Naive thymus-derived CD4-positive, alpha-beta T cell (primary cell): ENCODE measurements at regions of chrX and their contacts with region 1.

Region 1: DNA sequence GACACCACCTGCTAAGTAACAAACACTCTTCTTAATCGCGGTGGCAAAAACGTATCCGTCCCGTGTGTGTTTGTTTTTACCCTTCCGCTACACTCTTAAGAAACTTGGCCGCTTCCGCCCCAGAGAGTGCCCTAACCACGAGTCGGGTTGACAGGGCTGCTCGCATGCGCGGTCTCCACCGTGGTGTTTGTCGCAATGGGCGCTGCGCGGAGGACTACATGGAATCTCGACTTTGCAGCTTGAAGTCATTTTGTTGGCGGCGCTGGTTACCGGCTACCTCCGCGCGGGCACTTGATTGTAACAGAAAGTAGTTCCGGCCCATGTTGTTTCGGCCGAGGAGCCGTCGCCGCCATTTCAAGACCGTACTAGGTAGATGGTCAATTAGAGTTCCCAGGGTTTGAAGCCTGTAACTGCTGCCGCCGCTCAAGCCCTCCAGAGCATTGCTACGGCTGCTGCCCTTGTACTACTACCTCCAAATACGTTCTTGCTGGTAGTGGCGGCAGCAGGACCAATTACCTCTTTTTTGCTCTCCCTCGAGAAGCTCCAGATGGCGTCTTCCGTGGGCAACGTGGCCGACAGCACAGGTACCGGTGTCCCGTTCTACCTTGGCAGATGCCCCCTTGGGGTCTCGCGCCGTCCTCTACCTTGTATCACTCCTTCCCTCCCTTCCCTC is at the start of gene OGT:
- DNase-seq: peak; percentile 77 to 95 (median 92)
- ATAC-seq: peak; percentile 91
- H3K4me3 ChIP-seq: peak within 1 kb of the TSS; percentile 96
- H3K4me3 Mint-ChIP-seq: peak within 1 kb of the TSS; percentile 76 to 100 (median 98)
- H3K27ac ChIP-seq: peak within 1 kb of the TSS; percentile 91
- H3K27ac Mint-ChIP-seq: peak within 1 kb of the TSS; percentile 92 to 99 (median 99)
- H3K4me1 ChIP-seq: peaks cover 12 to 16% of the 10 kb centered on the region in 2 donors
- H3K4me1 Mint-ChIP-seq: peaks cover 4 to 35% (median 31%) of the 10 kb centered on the region in 7 donors
- H3K27me3 ChIP-seq: no peaks in the 10 kb centered on the region
- H3K27me3 Mint-ChIP-seq: no peaks in the 10 kb centered on the region
- total RNA-seq, gene OGT: 313 to 520 (median 424) TPM

Region 2: GRCh38 chrX:71118032-71118984 is 414.6 kb before region 1 on chrX and contains the start of gene MED12:
- CTCF ChIA-PET with region 1: no interaction called
- POLR2A ChIA-PET with region 1: interaction called, 3 read pairs
- intact Hi-C with region 1: loop called (anchors 5 to 10 kb)
- DNase-seq: peak; percentile 59 to 83 (median 75)
- ATAC-seq: peak; percentile 96
- H3K4me3 ChIP-seq: peak within 1 kb of the TSS; percentile 87
- H3K4me3 Mint-ChIP-seq: peak within 1 kb of the TSS; percentile 81 to 93 (median 86)
- H3K27ac ChIP-seq: peak within 1 kb of the TSS; percentile 93
- H3K27ac Mint-ChIP-seq: peak within 1 kb of the TSS; percentile 84 to 95 (median 92)
- H3K4me1 ChIP-seq: peaks cover 9 to 13% of the 10 kb centered on the region in 2 donors
- H3K4me1 Mint-ChIP-seq: peaks cover 10 to 43% (median 24%) of the 10 kb centered on the region in 7 donors
- H3K27me3 ChIP-seq: no peaks in the 10 kb centered on the region
- H3K27me3 Mint-ChIP-seq: no peaks in the 10 kb centered on the region
- total RNA-seq, gene MED12: 71.1 to 104 (median 77.4) TPM

Region 3: DNA sequence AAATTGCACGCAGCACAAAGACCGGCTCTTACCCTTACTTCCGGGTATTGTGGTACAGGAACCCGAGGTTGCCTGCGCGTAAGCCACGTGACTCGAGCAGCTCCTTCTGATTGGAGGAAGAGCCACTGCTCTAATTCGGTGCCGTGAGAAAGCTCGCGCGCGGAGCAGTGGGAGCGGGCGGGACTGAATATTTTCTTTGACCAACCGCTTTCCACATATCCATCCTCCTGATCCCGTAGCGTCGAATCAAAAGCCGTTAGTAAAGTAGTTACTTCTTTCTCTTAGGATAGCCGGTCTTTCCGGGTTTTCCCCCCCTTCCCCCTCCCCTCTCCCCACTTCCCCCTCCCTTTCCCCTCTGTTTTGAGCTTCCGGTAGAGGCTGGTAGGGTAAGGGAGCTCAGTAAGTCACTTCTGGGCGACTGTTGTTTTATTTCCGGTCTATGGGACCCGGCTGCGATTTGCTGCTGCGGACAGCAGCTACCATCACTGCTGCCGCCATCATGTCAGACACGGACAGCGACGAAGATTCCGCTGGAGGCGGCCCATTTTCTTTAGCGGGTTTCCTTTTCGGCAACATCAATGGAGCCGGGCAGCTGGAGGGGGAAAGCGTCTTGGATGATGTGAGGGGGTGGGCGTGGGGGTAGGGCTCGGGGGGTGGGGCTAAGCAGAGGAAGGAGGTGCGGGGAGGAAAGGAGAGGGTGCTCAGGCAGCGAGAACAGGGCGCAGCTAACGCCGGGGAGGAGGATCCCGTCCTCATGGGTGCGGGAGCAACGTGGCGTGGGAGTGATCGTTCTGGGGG is 166.8 kb before region 1 on chrX and contains the start of gene TAF1:
- CTCF ChIA-PET with region 1: interaction called, 3 read pairs
- POLR2A ChIA-PET with region 1: interaction called, 67 read pairs
- intact Hi-C with region 1: loop called (anchors 1 kb)
- DNase-seq: peak; percentile 61 to 94 (median 90)
- ATAC-seq: peak; percentile 93
- H3K4me3 ChIP-seq: peak within 1 kb of the TSS; percentile 81
- H3K4me3 Mint-ChIP-seq: peak within 1 kb of the TSS; percentile 86 to 99 (median 96)
- H3K27ac ChIP-seq: peak within 1 kb of the TSS; percentile 94
- H3K27ac Mint-ChIP-seq: peak within 1 kb of the TSS; percentile 97 to 100 (median 98)
- H3K4me1 ChIP-seq: peaks cover 5 to 9% of the 10 kb centered on the region in 2 donors
- H3K4me1 Mint-ChIP-seq: peaks cover 12 to 34% (median 27%) of the 10 kb centered on the region in 7 donors
- H3K27me3 ChIP-seq: no peaks in the 10 kb centered on the region
- H3K27me3 Mint-ChIP-seq: no peaks in the 10 kb centered on the region
- total RNA-seq, gene TAF1: 55.4 to 86.7 (median 76.1) TPM

Region 4: DNA sequence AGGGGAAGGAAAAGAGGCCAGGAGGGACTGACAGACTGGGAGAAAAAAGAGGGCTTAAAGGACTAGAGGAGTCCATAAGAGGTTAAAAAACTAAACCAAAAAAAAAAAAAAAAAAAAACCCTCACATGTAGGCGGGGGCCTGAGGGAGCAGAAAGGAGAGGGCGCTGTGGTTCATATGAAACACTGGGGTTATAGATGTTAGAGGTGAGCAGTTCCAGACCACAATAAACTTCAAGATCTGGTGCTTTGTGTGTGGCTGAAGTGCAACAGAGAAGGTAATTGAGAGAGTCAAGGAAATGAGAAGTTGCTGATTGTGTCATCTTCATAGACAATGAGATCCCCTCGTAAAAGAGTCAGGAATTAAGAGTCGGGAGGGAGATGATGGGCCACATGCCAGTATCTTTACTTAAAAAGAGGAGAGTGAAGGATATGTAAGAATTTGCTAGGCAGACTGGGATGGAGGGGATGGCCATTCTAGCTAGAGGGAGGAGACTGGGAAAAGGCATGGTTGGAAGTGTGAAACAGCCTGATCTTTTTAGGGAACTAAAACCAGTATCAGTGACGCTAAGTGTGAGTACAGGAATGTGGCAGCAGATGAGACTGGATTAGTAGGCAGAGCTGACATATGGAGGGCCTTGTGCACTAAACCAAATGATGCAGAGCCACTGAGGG is 18.4 kb before region 1 on chrX:
- CTCF ChIA-PET with region 1: interaction called, 5 read pairs
- POLR2A ChIA-PET with region 1: interaction called, 6 read pairs
- intact Hi-C with region 1: loop called (anchors 2 kb)
- DNase-seq: peak in 7 of 9 donors; percentile 28 to 57 (median 36)
- ATAC-seq: peak; percentile 91
- H3K4me3 ChIP-seq: no peak overlapping the region
- H3K4me3 Mint-ChIP-seq: peak overlapping the region in 2 of 10 donors; percentile 24 to 26
- H3K27ac ChIP-seq: no peak overlapping the region
- H3K27ac Mint-ChIP-seq: peak overlapping the region in 6 of 9 donors; percentile 17 to 76 (median 34)
- H3K4me1 ChIP-seq: peaks cover 3 to 6% of the 10 kb centered on the region in 2 donors
- H3K4me1 Mint-ChIP-seq: peaks cover 5 to 18% (median 10%) of the 10 kb centered on the region in 7 donors
- H3K27me3 ChIP-seq: no peaks in the 10 kb centered on the region
- H3K27me3 Mint-ChIP-seq: peaks cover 0 to 2% (median 0%) of the 10 kb centered on the region in 5 donors

Region 5: GRCh38 chrX:71622576-71623450 is 89.9 kb after region 1 on chrX:
- CTCF ChIA-PET with region 1: no interaction called
- POLR2A ChIA-PET with region 1: no interaction called
- intact Hi-C with region 1: loop called in 1 of 2 experiments (anchors 2 kb)
- DNase-seq: peak in 7 of 9 donors; percentile 12 to 61 (median 25)
- ATAC-seq: peak; percentile 75
- H3K4me3 ChIP-seq: peak overlapping the region; percentile 24
- H3K4me3 Mint-ChIP-seq: peak overlapping the region in 9 of 10 donors; percentile 5 to 74 (median 47)
- H3K27ac ChIP-seq: no peak overlapping the region
- H3K27ac Mint-ChIP-seq: peak overlapping the region; percentile 71 to 92 (median 80)
- H3K4me1 ChIP-seq: peaks cover 41 to 46% of the 10 kb centered on the region in 2 donors
- H3K4me1 Mint-ChIP-seq: peaks cover 25 to 68% (median 53%) of the 10 kb centered on the region in 7 donors
- H3K27me3 ChIP-seq: no peaks in the 10 kb centered on the region
- H3K27me3 Mint-ChIP-seq: no peaks in the 10 kb centered on the region